SK-N-SH (cell line): ENCODE measurements at regions of chr14 and their contacts with region 1.

Region 1: DNA sequence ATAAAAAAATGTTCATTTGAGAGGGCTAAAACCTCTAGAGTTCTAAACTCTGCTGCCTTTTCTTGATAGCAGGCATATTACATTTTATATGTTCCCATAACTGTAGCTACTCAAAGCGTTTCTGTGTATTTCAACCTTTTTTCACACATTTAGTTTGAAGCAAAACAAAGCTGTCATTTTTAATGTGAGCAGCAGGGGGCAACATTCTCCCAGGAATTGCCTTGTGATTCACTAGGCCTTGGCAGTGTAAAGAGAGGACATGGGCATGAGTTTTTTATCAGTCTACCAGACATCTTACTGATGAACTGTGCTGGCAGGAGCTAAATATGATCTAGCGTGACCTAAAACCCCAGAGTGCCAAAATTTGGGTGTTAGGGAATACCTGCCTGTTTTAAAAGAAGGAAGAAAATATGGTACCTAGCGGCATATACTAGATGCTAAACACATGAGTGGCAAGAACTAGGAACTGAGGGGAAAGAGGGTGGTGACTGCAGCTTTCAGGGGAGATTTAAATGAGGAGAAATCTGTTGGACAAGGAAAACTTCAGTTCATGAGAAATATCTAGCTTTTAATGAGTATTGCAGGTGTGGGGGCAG is 65.3 kb downstream of the IFT43 start:
- DNase-seq: peak; percentile 63
- H3K4me3 ChIP-seq: peak overlapping the region in 1 of 2 experiments; percentile 9; a peak in 1 of 4 replicates
- H3K27ac ChIP-seq: no peak overlapping the region
- H3K4me1 ChIP-seq: peaks cover 0 to 14% of the 10 kb centered on the region in 2 experiments; a peak in 2 of 4 replicates
- H3K27me3 ChIP-seq: no peaks in the 10 kb centered on the region
- CTCF ChIP-seq: peak; percentile 89
- EP300 ChIP-seq: no peak
- RAD21 ChIP-seq: peak; percentile 99

Region 2: DNA sequence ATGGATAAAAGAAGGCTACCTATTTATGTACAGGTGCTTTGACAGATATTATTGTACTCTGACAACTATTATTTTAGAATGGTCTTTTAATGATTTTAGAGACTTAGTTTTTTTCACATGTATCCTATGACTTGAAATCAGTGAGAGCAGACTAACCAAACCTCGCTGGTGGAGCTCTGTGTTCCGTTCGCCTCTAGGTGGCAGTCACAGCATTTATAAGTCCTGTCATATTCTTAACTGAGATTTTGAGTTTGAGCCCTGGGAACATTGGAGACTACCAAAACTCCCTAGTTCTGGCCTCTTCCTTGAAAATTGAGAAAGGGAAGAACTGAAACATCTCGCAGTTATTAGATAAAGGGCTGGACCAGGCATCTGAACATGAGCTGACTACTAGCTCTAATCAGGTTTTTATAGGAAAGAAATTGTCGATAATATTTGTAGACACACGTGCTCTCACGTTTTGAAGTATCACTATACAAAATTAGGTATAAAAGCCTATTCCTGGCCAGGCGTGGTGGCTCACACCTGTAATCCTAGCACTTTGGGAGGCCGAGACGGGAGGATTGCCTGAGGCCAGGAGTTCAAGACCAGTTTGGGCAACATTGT is 341.6 kb before region 1 on chr14:
- CTCF ChIA-PET with region 1: interaction called, 12 read pairs
- POLR2A ChIA-PET with region 1: no interaction called
- DNase-seq: peak; percentile 52
- H3K4me3 ChIP-seq: no peak overlapping the region; a peak in 1 of 4 replicates
- H3K27ac ChIP-seq: no peak overlapping the region
- H3K4me1 ChIP-seq: peaks cover 6 to 11% of the 10 kb centered on the region in 2 experiments; a peak in 3 of 4 replicates
- H3K27me3 ChIP-seq: no peaks in the 10 kb centered on the region
- CTCF ChIP-seq: peak; percentile 90
- EP300 ChIP-seq: no peak
- RAD21 ChIP-seq: peak; percentile 85

Region 3: DNA sequence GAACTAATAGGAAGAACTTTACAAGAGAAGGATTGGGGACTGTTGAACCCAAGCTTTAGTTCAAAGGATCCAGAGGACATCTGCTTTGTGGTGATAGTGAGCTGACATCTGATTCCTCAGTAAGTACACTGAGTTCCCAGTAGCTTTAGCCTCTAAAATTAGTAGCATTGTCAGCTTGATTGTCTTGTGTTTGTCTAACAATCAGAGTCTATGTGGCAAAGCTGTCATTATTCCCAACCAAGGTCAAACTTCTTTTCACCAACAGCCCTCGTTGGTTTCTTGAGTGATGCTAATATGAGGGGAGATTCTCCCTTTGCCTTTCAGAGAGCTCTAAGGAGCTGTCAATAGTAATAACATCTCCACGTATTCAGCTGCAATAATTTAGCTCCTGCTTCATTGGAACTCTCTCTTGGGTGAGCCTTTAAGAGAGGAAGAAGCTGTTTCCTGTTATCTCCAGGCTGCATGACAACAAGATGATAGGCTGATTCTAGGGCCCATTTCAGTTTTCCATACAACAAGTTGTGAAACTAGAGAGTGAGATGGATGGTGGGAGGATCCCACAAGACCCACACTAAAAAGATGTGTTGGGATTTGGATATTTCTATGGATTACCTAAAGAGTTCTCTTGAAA is 115.8 kb before region 1 on chr14:
- CTCF ChIA-PET with region 1: no interaction called
- POLR2A ChIA-PET with region 1: no interaction called
- DNase-seq: no peak
- H3K4me3 ChIP-seq: no peak overlapping the region
- H3K27ac ChIP-seq: no peak overlapping the region
- H3K4me1 ChIP-seq: no peaks in the 10 kb centered on the region
- H3K27me3 ChIP-seq: no peaks in the 10 kb centered on the region
- CTCF ChIP-seq: no peak
- EP300 ChIP-seq: no peak
- RAD21 ChIP-seq: no peak

Region 4: GRCh38 chr14:75993567-75994041 is 57.3 kb before region 1 on chr14:
- CTCF ChIA-PET with region 1: no interaction called
- POLR2A ChIA-PET with region 1: no interaction called
- DNase-seq: no peak
- H3K4me3 ChIP-seq: no peak overlapping the region
- H3K27ac ChIP-seq: no peak overlapping the region
- H3K4me1 ChIP-seq: peaks cover 0 to 10% of the 10 kb centered on the region in 2 experiments; a peak in 2 of 4 replicates
- H3K27me3 ChIP-seq: no peaks in the 10 kb centered on the region
- CTCF ChIP-seq: no peak
- EP300 ChIP-seq: no peak
- RAD21 ChIP-seq: no peak

Region 5: DNA sequence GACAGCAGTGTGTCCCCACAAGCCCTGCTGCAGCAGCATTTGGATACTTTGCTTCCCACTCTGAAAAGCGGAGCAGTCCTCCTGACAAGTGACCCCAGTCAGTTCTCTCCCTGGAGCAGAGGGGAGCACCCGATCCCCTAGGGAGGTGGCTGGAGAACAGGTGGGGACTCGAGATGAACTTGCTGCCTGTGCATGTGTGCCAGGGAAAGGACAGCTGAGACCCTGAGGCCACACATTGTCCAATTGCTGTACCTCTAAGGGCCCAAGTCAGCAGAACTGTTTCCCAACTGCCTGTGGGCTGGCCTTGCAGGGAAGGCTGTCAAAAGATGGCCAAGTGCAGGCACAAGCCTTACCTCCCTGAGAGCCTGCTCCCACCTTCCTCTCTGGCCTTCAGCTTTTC is 10.2 kb before region 1 on chr14:
- CTCF ChIA-PET with region 1: interaction called, 27 read pairs
- POLR2A ChIA-PET with region 1: no interaction called
- DNase-seq: no peak
- H3K4me3 ChIP-seq: no peak overlapping the region
- H3K27ac ChIP-seq: no peak overlapping the region
- H3K4me1 ChIP-seq: no peaks in the 10 kb centered on the region
- H3K27me3 ChIP-seq: no peaks in the 10 kb centered on the region
- CTCF ChIP-seq: no peak
- EP300 ChIP-seq: no peak
- RAD21 ChIP-seq: no peak

Region 6: DNA sequence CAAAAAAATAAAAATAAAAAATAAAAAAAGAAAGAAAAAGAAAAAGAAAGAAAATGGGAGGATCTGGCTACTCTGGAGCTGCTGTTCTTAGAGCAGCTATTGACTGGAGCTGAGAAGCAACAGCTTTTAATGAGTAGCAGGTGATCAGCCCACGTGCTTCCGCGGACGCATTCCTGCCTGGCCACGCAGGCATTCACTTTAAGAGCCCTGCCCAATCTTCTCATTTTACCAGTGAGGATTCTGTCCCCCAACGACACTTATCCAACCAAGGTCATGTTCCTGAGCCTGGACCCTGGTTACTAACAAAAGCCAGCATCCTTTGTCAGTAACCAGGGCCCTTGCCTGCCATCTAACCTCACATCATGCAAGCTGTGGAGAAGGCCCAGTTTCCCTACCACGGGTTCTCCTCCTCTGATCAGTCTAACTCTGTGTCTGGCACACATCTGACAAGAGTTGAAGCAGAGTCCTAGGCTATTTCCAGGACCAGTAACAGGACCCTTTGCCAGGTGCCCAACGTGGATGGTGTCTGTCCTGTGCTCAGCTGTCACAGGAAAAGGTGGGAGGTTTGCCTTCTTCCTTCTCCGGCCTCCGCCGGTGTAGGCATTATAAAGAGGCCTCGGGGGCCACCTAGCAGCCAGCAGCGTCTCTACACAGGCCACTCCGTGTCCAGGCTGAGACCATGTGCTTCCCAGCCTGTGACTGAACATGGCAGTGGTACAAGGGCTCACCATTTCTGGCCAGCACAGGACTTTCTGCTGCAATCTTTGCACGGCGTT is 39.9 kb after region 1 on chr14:
- CTCF ChIA-PET with region 1: interaction called, 15 read pairs
- POLR2A ChIA-PET with region 1: interaction called, 5 read pairs
- DNase-seq: no peak
- H3K4me3 ChIP-seq: no peak overlapping the region
- H3K27ac ChIP-seq: no peak overlapping the region
- H3K4me1 ChIP-seq: peaks cover 0 to 11% of the 10 kb centered on the region in 2 experiments; a peak in 1 of 4 replicates
- H3K27me3 ChIP-seq: no peaks in the 10 kb centered on the region
- CTCF ChIP-seq: no peak
- EP300 ChIP-seq: no peak
- RAD21 ChIP-seq: no peak

Region 7: GRCh38 chr14:76186308-76187027 is 135.6 kb after region 1 on chr14:
- CTCF ChIA-PET with region 1: interaction called, 13 read pairs
- POLR2A ChIA-PET with region 1: no interaction called
- DNase-seq: peak; percentile 27
- H3K4me3 ChIP-seq: no peak overlapping the region
- H3K27ac ChIP-seq: peak overlapping the region in 1 of 2 experiments; percentile 50; a peak in 2 of 4 replicates
- H3K4me1 ChIP-seq: peaks cover 0 to 13% of the 10 kb centered on the region in 2 experiments; a peak in 2 of 4 replicates
- H3K27me3 ChIP-seq: no peaks in the 10 kb centered on the region
- CTCF ChIP-seq: no peak
- EP300 ChIP-seq: peak in 1 of 2 experiments; percentile 39; a peak in 1 of 4 replicates
- RAD21 ChIP-seq: no peak

Region 8: DNA sequence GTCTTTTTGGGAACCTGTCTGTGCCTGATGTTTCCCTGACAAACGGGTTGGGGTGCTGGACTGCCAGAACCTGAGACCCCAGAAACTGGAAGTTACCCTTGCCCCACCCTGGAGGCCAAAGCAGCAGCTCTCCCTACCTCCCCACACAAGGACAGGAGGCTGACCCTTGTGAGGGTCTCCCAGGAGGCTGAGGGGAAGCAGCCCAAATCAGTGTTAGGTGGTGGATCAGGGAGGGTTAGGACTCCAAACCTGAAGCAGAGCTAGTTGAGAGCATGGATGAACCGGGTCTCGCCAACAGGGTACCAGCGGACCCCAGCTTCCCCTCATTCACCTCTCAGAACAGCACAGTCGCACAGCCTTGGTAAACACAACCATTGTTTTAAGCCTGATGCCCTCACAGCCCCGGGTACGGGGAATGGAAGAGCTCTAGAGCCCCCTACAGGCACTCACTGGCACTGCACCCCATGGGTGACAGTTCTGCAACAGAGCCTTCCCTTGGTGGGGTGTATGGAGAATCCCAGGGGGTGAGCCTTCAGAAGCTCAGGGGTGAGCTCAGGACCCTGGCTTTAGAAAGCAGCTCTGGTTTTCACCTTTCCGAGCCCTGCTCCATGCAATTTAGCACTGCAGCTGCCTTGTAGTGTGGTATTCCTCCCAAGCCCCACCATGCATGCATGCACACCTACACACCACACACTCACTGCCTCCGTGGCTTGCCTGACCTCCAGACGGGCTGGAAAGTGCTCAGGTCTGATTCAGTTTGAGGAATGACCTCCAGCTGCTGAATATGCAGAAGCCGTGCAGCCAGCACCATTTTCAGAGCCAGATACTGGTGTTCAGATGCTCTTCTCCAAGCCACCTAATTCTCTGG is 336.3 kb after region 1 on chr14:
- CTCF ChIA-PET with region 1: interaction called, 63 read pairs
- POLR2A ChIA-PET with region 1: no interaction called
- DNase-seq: peak; percentile 90
- H3K4me3 ChIP-seq: peak overlapping the region in 1 of 2 experiments; percentile 50; a peak in 1 of 4 replicates
- H3K27ac ChIP-seq: no peak overlapping the region
- H3K4me1 ChIP-seq: no peaks in the 10 kb centered on the region; a peak in 1 of 4 replicates
- H3K27me3 ChIP-seq: peaks cover 46% of the 10 kb centered on the region
- CTCF ChIP-seq: peak; percentile 97
- EP300 ChIP-seq: no peak
- RAD21 ChIP-seq: peak; percentile 95